ENCODE measurements at regions of chr4 and their contacts with region 1.

Region 1: GRCh38 chr4:112765317-112765975 is 128.5 kb downstream of the LARP7 start:
- DNase-seq: peak; percentile 11
- H3K4me3 Mint-ChIP-seq: no peak overlapping the region
- H3K27ac Mint-ChIP-seq: no peak overlapping the region
- H3K4me1 Mint-ChIP-seq: no peaks in the 10 kb centered on the region
- H3K27me3 Mint-ChIP-seq: no peaks in the 10 kb centered on the region
- CTCF ChIP-seq: peak; percentile 25

Region 2: GRCh38 chr4:111736516-111736915 is 1028.9 kb before region 1 on chr4:
- CTCF ChIA-PET with region 1: no interaction called
- POLR2A ChIA-PET with region 1: no interaction called
- intact Hi-C with region 1: no loop called
- DNase-seq: no peak
- H3K4me3 Mint-ChIP-seq: no peak overlapping the region
- H3K27ac Mint-ChIP-seq: no peak overlapping the region
- H3K4me1 Mint-ChIP-seq: no peaks in the 10 kb centered on the region
- H3K27me3 Mint-ChIP-seq: peaks cover 91% of the 10 kb centered on the region
- CTCF ChIP-seq: no peak

Region 3: DNA sequence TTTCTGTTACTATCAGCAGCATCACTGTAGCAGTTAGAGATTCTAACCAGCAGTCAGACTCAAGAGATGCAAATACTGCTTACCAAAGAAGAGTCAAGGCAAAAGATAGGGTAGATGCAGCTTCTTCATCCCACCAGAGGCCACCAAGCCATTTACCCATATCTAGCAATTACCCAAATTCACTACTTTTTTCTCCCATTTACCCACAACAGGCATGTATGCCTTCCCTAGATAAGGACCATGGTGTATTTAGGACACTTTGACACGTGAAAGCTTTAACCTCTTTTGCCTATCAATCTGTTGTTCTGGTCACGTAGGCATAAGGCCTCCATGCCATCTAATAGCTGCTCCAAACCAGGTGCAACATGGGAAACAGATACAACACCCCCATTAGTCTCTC is 122.9 kb before region 1 on chr4:
- CTCF ChIA-PET with region 1: interaction called, 19 read pairs
- POLR2A ChIA-PET with region 1: no interaction called
- intact Hi-C with region 1: no loop called
- DNase-seq: no peak
- H3K4me3 Mint-ChIP-seq: no peak overlapping the region
- H3K27ac Mint-ChIP-seq: no peak overlapping the region
- H3K4me1 Mint-ChIP-seq: peaks cover 14% of the 10 kb centered on the region
- H3K27me3 Mint-ChIP-seq: no peaks in the 10 kb centered on the region
- CTCF ChIP-seq: no peak

Region 4: DNA sequence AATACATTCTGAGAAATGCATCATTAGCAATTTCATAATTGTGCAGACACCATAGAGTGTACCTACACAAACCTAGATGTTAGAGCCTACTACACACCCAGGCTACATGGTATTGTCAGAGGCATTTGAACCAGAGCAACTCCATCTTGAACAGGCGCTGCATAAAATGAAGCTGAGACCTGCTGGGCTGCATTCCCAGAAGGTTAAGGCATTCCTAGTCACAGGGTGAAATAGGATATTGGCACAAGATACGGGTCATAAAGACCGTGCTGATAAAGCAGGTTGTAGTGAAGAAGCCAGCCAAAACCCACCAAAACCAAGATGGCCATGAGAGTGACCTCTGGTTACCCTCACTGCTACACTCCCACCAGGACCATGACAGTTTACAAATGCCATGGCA is 12.1 kb before region 1 on chr4:
- CTCF ChIA-PET with region 1: interaction called, 21 read pairs
- POLR2A ChIA-PET with region 1: no interaction called
- intact Hi-C with region 1: no loop called
- DNase-seq: no peak
- H3K4me3 Mint-ChIP-seq: no peak overlapping the region
- H3K27ac Mint-ChIP-seq: no peak overlapping the region
- H3K4me1 Mint-ChIP-seq: no peaks in the 10 kb centered on the region
- H3K27me3 Mint-ChIP-seq: no peaks in the 10 kb centered on the region
- CTCF ChIP-seq: no peak

Region 5: DNA sequence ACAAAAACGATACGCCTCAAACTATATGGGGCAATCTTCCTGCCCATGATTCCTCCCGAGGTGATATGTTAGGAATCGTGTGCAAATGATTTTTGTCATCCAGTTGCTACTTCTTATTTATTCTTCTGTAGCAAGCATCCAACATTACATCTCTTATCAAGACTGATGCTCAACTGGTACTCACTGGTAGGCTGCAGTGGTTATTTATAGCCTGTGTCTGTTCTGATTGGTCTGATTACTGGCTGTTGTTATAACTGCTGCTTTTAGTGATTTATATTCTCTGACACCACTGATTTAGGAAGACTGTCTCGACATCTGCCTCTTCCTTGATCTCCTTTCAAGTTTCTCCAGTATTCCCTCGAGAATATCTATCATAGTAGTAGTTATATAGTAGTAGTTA is 37.3 kb after region 1 on chr4:
- CTCF ChIA-PET with region 1: interaction called, 11 read pairs
- POLR2A ChIA-PET with region 1: no interaction called
- intact Hi-C with region 1: no loop called
- DNase-seq: no peak
- H3K4me3 Mint-ChIP-seq: no peak overlapping the region
- H3K27ac Mint-ChIP-seq: no peak overlapping the region
- H3K4me1 Mint-ChIP-seq: no peaks in the 10 kb centered on the region
- H3K27me3 Mint-ChIP-seq: no peaks in the 10 kb centered on the region
- CTCF ChIP-seq: no peak

Region 6: DNA sequence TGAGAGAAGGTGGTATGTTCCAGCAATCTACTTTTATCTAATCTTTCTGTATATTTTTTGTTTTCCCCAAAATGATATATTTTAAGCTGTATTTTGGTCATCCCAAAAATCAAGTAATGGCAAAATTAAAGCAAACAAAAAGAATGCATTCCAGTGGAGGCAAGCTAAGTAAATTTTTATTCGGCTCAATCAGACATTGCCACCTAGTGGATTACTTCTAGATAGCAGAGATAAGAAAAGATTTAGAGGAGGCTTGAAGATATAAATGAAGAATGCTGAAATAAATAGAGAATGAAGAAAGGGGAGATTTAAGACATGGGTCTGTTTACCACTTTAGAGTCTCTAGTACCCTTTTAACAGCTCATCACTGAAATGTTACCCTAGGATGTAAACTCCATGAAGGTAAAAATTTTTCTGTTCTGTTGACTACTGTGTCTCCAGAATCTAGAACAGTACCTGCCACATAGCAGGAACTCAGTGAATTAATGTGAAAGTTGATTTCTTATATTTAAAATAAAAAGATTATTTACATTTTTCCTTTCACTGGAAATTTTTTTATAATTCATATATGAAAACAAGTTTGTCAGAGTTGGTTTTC is 173.1 kb after region 1 on chr4:
- CTCF ChIA-PET with region 1: interaction called, 168 read pairs
- POLR2A ChIA-PET with region 1: no interaction called
- intact Hi-C with region 1: loop called (anchors 1 kb)
- DNase-seq: peak; percentile 57
- H3K4me3 Mint-ChIP-seq: no peak overlapping the region
- H3K27ac Mint-ChIP-seq: no peak overlapping the region
- H3K4me1 Mint-ChIP-seq: no peaks in the 10 kb centered on the region
- H3K27me3 Mint-ChIP-seq: no peaks in the 10 kb centered on the region
- CTCF ChIP-seq: peak; percentile 77

Measured in MCF 10A (cell line).